CD4-positive, alpha-beta memory T cell (primary cell): ENCODE measurements at regions of chr19 and their contacts with region 1.

Region 1: DNA sequence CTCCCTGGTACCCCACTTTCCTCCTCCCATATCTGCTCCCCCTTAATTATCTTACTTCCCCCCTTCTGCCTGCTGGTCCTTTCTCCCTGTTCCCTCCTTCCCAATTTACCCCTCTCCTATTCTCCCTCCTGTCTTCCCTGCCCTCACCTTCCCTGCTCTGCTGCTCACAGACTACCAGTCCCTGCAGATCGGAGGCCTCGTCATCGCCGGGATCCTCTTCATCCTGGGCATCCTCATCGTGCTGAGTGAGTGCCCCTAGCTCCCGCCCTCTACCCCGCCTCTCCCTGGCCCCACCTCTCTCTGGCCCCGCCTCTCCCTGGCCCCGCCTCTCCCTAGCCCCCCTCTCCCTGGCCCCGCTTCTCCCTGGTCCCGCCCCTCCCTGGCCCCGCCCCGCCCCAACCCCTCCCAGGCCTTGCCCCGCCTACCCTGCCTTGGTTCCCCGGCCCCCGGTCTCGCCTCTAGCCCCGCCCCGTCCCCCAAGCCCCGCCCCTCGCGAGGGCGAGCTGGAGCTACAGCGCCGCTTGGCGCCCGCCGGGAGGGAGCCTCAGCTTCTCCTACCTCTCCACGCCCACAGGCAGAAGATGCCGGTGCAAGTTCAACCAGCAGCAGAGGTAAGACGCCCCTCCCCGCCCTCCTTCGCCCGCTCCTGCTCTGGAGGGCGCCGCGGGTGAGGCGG is 2.0 kb upstream of the FXYD7 start:
- DNase-seq: peak; percentile 92 to 94 (median 93)
- H3K4me3 ChIP-seq: peak overlapping the region; percentile 24 to 75
- H3K4me3 Mint-ChIP-seq: peak overlapping the region; percentile 82 to 96 (median 88)
- H3K27ac ChIP-seq: no peak overlapping the region
- H3K27ac Mint-ChIP-seq: peak overlapping the region; percentile 88 to 96 (median 90)
- H3K4me1 ChIP-seq: peaks cover 46% of the 10 kb centered on the region
- H3K4me1 Mint-ChIP-seq: peaks cover 28 to 53% (median 39%) of the 10 kb centered on the region in 4 donors
- H3K27me3 ChIP-seq: no peaks in the 10 kb centered on the region
- H3K27me3 Mint-ChIP-seq: no peaks in the 10 kb centered on the region

Region 2: DNA sequence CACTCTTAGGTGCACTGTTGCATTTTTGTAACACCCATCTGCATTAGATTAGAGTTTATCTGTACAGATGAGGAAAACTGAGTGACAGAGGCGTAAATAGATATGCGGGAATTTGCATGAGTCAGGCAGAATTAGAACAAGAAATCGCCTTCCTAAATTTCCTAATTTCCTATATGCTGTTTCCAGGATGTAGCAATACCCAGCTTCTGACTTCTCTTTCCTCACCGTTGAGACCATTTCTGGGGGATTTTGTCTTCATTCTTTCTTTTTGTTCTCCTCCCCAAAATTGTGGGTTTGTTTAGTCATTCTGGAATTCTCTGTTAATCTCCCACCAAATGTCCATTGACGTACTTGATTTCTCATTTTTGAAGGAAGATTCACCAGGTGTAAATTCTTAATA is 166.5 kb before region 1 on chr19:
- CTCF ChIA-PET with region 1: interaction called, 10 read pairs
- POLR2A ChIA-PET with region 1: no interaction called
- intact Hi-C with region 1: loop called (anchors 2 kb)
- DNase-seq: no peak
- H3K4me3 ChIP-seq: no peak overlapping the region
- H3K4me3 Mint-ChIP-seq: peak overlapping the region in 1 of 8 donors; percentile 26
- H3K27ac ChIP-seq: no peak overlapping the region
- H3K27ac Mint-ChIP-seq: peak overlapping the region in 1 of 7 donors; percentile 50
- H3K4me1 ChIP-seq: peaks cover 11% of the 10 kb centered on the region
- H3K4me1 Mint-ChIP-seq: peaks cover 9 to 19% (median 13%) of the 10 kb centered on the region in 4 donors
- H3K27me3 ChIP-seq: no peaks in the 10 kb centered on the region
- H3K27me3 Mint-ChIP-seq: peaks cover 0 to 4% of the 10 kb centered on the region in 2 donors

Region 3: DNA sequence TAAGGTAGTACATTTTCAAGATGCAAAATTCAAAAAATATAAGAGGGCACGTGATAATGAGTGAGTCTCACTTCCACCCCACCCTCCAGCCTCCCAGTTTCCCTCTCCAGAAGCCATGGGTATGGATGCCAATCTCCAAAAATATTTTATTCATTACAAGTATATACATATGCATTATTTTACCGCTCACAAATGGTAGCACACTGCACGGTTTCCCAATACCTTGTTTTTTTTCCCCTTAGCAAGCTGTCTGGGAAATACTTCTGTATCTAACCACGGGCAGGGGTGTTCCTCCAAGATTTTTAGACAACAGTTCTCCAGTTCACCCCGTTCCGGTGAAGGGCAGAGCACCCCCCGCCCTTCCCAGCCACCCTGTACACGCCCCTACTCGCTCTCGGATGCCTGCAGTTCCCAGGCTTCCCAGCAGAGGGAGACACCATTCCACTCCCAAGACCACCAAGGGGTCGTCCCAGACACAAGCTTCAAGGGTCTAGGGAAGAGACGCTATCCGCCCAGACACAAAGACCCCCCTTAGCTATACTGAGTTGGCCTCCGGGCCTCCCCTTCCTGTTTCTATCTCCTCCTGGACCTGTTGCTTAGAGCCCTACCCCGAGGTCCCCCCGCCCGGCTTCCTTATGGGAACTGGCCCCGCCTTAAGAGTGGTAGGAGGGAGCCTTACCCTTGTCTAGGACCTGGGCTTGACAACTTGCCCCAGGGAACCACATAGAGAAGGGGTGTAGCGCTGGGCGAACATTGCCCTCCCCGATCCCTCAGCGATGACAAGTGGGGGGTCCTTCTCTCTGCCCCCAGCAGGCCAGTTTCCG is 26.5 kb before region 1 on chr19:
- CTCF ChIA-PET with region 1: interaction called, 20 read pairs
- POLR2A ChIA-PET with region 1: interaction called, 5 read pairs
- intact Hi-C with region 1: loop called (anchors 2 kb)
- DNase-seq: peak; percentile 56 to 64 (median 58)
- H3K4me3 ChIP-seq: no peak overlapping the region
- H3K4me3 Mint-ChIP-seq: peak overlapping the region in 2 of 8 donors; percentile 25 to 36
- H3K27ac ChIP-seq: no peak overlapping the region
- H3K27ac Mint-ChIP-seq: peak overlapping the region in 4 of 7 donors; percentile 30 to 77 (median 60)
- H3K4me1 ChIP-seq: peaks cover 9% of the 10 kb centered on the region
- H3K4me1 Mint-ChIP-seq: peaks cover 4 to 7% (median 5%) of the 10 kb centered on the region in 4 donors
- H3K27me3 ChIP-seq: no peaks in the 10 kb centered on the region
- H3K27me3 Mint-ChIP-seq: peaks cover 5 to 11% of the 10 kb centered on the region in 2 donors

Region 4: GRCh38 chr19:35154525-35155406 is 13.7 kb after region 1 on chr19 and contains the start of gene FXYD5:
- CTCF ChIA-PET with region 1: interaction called, 90 read pairs
- POLR2A ChIA-PET with region 1: interaction called, 109 read pairs
- intact Hi-C with region 1: loop called (anchors 1 kb)
- DNase-seq: peak; percentile 60 to 84 (median 64)
- H3K4me3 ChIP-seq: peak within 1 kb of the TSS; percentile 91 to 95
- H3K4me3 Mint-ChIP-seq: peak within 1 kb of the TSS; percentile 98 to 100 (median 99)
- H3K27ac ChIP-seq: peak within 1 kb of the TSS; percentile 91
- H3K27ac Mint-ChIP-seq: peak within 1 kb of the TSS; percentile 98 to 99 (median 99)
- H3K4me1 ChIP-seq: peaks cover 56% of the 10 kb centered on the region
- H3K4me1 Mint-ChIP-seq: peaks cover 35 to 68% (median 46%) of the 10 kb centered on the region in 4 donors
- H3K27me3 ChIP-seq: no peaks in the 10 kb centered on the region
- H3K27me3 Mint-ChIP-seq: no peaks in the 10 kb centered on the region
- total RNA-seq, gene FXYD5: 473 to 484 TPM

Region 5: DNA sequence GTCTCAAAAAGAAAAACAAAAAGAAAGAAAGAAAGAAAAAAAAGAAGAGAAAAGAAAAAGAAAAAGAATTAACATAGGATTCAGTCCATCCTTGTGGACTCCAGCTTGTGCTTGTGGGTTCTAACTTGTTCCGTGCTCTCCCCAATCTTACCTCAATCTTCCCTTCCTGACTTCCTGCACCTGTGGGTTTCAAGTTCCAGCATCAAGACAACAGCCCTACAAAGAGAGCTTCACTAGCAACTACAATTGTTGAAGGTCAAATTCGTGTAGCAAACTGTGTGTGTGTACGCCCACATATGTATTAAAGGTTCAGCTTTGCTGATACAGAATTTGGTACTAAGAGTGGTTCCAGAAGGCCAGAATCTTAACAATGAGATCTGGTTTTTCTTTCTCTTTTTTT is 38.7 kb after region 1 on chr19:
- CTCF ChIA-PET with region 1: interaction called, 11 read pairs
- POLR2A ChIA-PET with region 1: no interaction called
- intact Hi-C with region 1: no loop called
- DNase-seq: no peak
- H3K4me3 ChIP-seq: no peak overlapping the region
- H3K4me3 Mint-ChIP-seq: peak overlapping the region in 5 of 8 donors; percentile 21 to 90 (median 56)
- H3K27ac ChIP-seq: no peak overlapping the region
- H3K27ac Mint-ChIP-seq: peak overlapping the region in 5 of 7 donors; percentile 4 to 94 (median 80)
- H3K4me1 ChIP-seq: peaks cover 27% of the 10 kb centered on the region
- H3K4me1 Mint-ChIP-seq: peaks cover 24 to 62% (median 37%) of the 10 kb centered on the region in 4 donors
- H3K27me3 ChIP-seq: no peaks in the 10 kb centered on the region
- H3K27me3 Mint-ChIP-seq: no peaks in the 10 kb centered on the region

Region 6: GRCh38 chr19:35236638-35237400 is 95.7 kb after region 1 on chr19:
- CTCF ChIA-PET with region 1: interaction called, 15 read pairs
- POLR2A ChIA-PET with region 1: interaction called, 32 read pairs
- intact Hi-C with region 1: no loop called
- DNase-seq: peak in 3 of 5 donors; percentile 34 to 38 (median 36)
- H3K4me3 ChIP-seq: no peak overlapping the region
- H3K4me3 Mint-ChIP-seq: no peak overlapping the region
- H3K27ac ChIP-seq: no peak overlapping the region
- H3K27ac Mint-ChIP-seq: peak overlapping the region in 5 of 7 donors; percentile 30 to 93 (median 59)
- H3K4me1 ChIP-seq: peaks cover 34% of the 10 kb centered on the region
- H3K4me1 Mint-ChIP-seq: peaks cover 20 to 42% (median 37%) of the 10 kb centered on the region in 4 donors
- H3K27me3 ChIP-seq: no peaks in the 10 kb centered on the region
- H3K27me3 Mint-ChIP-seq: no peaks in the 10 kb centered on the region

Region 7: GRCh38 chr19:35269421-35270117 is 128.5 kb after region 1 on chr19:
- CTCF ChIA-PET with region 1: interaction called, 6 read pairs
- POLR2A ChIA-PET with region 1: interaction called, 24 read pairs
- intact Hi-C with region 1: loop called (anchors 2 kb)
- DNase-seq: peak; percentile 68 to 74 (median 70)
- H3K4me3 ChIP-seq: peak overlapping the region in 1 of 2 donors; percentile 41
- H3K4me3 Mint-ChIP-seq: peak overlapping the region; percentile 65 to 83 (median 77)
- H3K27ac ChIP-seq: peak overlapping the region; percentile 41
- H3K27ac Mint-ChIP-seq: peak overlapping the region; percentile 61 to 86 (median 77)
- H3K4me1 ChIP-seq: peaks cover 37% of the 10 kb centered on the region
- H3K4me1 Mint-ChIP-seq: peaks cover 20 to 53% (median 38%) of the 10 kb centered on the region in 4 donors
- H3K27me3 ChIP-seq: no peaks in the 10 kb centered on the region
- H3K27me3 Mint-ChIP-seq: no peaks in the 10 kb centered on the region